ENCODE measurements at regions of chr22 and their contacts with region 1.

Region 1: GRCh38 chr22:35930933-35931332 is 97.7 kb downstream of the RBFOX2 start:
- DNase-seq: peak in 1 of 35 experiments; percentile 9
- ATAC-seq: no peak
- H3K4me3 ChIP-seq: no peak overlapping the region
- H3K4me3 Mint-ChIP-seq: no peak overlapping the region
- H3K27ac ChIP-seq: no peak overlapping the region
- H3K27ac Mint-ChIP-seq: no peak overlapping the region
- H3K4me1 ChIP-seq: no peaks in the 10 kb centered on the region
- H3K4me1 Mint-ChIP-seq: no peaks in the 10 kb centered on the region
- H3K27me3 ChIP-seq: peaks cover 0 to 4% of the 10 kb centered on the region in 2 experiments
- H3K27me3 Mint-ChIP-seq: peaks cover 2 to 3% of the 10 kb centered on the region in 2 donors

Region 2: DNA sequence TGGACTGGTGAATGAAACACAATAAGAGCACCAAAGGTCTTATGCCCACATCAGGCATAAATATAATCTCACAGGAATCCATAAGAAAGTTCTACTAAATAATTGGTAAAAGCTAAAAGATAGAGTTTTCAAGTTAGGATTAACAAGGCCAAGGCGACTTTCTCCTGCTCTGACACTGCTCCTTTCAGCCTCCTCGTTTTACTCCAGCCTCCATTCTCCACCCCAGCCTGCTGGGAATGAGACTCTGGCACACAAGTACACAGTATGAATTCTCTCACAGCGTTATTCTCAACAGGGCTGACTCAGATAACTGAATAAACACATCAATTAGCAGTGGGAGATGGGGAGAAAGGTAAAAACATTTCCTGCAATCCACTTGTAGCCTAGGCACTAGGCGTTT is 118.3 kb before region 1 on chr22:
- CTCF ChIA-PET with region 1: no interaction called
- POLR2A ChIA-PET with region 1: interaction called in 1 of 2 experiments, 10 read pairs
- DNase-seq: no peak
- ATAC-seq: no peak
- H3K4me3 ChIP-seq: no peak overlapping the region
- H3K4me3 Mint-ChIP-seq: no peak overlapping the region
- H3K27ac ChIP-seq: no peak overlapping the region
- H3K27ac Mint-ChIP-seq: no peak overlapping the region
- H3K4me1 ChIP-seq: no peaks in the 10 kb centered on the region
- H3K4me1 Mint-ChIP-seq: no peaks in the 10 kb centered on the region
- H3K27me3 ChIP-seq: no peaks in the 10 kb centered on the region
- H3K27me3 Mint-ChIP-seq: peaks cover 0 to 3% of the 10 kb centered on the region in 2 donors